ENCODE measurements at regions of chr2 and their contacts with region 1.

Region 1: GRCh38 chr2:20661067-20661980 is 5.6 kb upstream of the GDF7 start:
- DNase-seq: peak; percentile 77
- H3K4me3 Mint-ChIP-seq: no peak overlapping the region
- H3K27ac Mint-ChIP-seq: peak overlapping the region; percentile 24
- H3K4me1 Mint-ChIP-seq: peaks cover 8% of the 10 kb centered on the region
- H3K27me3 Mint-ChIP-seq: peaks cover 77% of the 10 kb centered on the region

Region 2: DNA sequence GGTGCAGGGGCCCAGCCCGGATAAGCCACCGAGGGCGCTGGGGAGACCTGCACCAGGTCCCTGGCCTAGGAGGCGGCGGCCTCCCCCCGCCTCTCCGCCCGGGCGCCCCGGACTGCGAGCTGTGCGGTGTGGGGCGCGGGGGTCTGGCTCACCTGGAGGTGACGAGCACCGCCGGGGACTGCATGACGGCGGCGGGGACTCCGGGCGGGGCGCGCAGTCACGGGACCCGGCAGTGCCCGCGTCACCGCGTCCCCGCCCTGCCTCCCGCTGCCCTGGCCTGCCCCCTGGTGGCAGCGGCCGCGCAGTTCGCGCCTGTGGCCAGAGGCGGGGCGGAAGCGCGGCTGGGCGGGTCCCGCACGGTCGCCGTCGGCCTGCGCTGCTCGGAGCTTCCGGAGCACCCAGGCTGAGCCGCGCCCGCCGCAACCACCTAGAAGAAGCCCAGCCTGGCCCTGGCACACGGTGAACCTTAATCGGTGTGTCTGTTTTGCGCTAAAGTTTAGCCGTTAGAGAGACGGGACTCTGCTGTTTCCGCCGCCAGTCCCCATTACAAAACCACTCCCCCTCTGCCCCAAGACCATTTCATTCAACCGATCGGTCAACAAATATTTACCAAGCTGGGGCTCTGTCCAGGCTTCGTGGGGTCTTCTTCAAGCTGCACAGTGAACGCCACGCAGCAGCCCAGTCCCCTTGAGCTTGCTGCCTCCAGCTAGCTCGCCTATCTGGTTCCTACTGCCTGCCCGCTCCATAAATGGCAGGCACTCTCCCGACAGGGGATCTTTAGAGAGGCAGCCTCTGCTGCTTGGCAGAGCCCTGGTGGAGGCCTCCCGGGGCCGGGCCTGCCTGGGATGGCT is 10.2 kb before region 1 on chr2 and contains the start of gene HS1BP3:
- CTCF ChIA-PET with region 1: interaction called, 39 read pairs
- DNase-seq: peak; percentile 87
- H3K4me3 Mint-ChIP-seq: peak within 1 kb of the TSS; percentile 87
- H3K27ac Mint-ChIP-seq: peak within 1 kb of the TSS; percentile 88
- H3K4me1 Mint-ChIP-seq: peaks cover 37% of the 10 kb centered on the region
- H3K27me3 Mint-ChIP-seq: peaks cover 18% of the 10 kb centered on the region

Region 3: DNA sequence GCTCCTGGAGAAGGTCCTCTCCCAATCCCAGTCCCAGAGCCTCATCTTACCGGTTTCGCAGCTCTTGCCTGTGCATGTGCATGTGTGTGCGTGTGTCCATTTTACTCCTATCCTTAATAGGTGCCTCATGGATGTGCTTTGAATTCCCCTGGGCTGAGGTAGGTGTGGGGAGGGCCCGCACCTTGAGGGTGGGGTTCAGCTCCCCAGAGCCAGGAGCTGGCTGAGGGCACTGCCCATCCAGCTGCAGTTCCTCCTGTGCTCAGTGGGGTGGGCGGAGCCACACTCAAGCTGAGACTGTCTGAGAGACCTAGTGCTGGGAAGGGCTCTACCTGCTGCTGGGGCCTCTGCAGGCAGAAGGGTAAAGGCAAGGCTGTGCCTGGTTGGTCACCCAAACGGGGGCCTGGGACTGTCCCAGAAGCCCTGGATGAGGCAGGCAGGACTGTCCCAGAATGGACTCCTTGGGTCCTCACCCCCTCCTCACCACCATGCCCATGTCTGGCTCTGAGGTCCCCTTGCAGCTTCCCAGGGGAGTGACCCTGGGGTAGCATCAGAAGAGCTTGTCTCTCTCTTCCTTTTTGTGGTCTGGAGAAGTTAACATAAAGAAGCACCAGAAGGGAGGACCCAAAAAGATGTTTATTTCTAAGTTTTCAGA is 14.5 kb after region 1 on chr2:
- CTCF ChIA-PET with region 1: interaction called, 33 read pairs
- DNase-seq: no peak
- H3K4me3 Mint-ChIP-seq: no peak overlapping the region
- H3K27ac Mint-ChIP-seq: peak overlapping the region; percentile 2
- H3K4me1 Mint-ChIP-seq: no peaks in the 10 kb centered on the region
- H3K27me3 Mint-ChIP-seq: peaks cover 36% of the 10 kb centered on the region

Region 4: DNA sequence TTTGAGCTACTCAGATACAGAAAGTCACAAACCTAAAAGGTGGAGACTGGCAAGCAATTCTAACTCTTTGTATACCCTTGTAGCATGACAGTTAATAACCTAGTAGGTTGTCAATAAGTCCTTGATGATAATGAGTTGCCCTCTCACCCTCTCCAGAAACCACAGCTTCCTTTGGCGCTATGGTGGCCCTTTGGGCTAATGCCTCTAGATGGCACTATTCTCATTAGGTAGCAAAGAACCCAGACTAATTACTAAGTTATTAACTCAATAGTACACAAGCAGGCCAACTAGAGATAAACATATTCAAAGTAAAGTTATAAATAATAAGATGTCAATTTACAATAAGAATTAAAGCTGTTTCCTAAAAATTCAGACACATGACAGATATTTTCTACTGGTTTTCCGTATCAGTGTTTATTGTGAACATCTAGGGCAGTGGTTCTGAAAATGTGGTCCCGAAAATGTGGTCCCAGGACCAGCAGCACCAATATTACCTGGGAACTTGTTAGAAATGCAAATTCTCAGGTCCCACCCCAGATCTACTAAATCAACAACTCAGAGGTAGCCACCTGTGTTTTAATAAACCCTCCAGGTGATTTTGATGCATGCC is 120.4 kb after region 1 on chr2:
- CTCF ChIA-PET with region 1: interaction called, 11 read pairs
- DNase-seq: peak; percentile 22
- H3K4me3 Mint-ChIP-seq: no peak overlapping the region
- H3K27ac Mint-ChIP-seq: no peak overlapping the region
- H3K4me1 Mint-ChIP-seq: no peaks in the 10 kb centered on the region
- H3K27me3 Mint-ChIP-seq: no peaks in the 10 kb centered on the region

Region 5: DNA sequence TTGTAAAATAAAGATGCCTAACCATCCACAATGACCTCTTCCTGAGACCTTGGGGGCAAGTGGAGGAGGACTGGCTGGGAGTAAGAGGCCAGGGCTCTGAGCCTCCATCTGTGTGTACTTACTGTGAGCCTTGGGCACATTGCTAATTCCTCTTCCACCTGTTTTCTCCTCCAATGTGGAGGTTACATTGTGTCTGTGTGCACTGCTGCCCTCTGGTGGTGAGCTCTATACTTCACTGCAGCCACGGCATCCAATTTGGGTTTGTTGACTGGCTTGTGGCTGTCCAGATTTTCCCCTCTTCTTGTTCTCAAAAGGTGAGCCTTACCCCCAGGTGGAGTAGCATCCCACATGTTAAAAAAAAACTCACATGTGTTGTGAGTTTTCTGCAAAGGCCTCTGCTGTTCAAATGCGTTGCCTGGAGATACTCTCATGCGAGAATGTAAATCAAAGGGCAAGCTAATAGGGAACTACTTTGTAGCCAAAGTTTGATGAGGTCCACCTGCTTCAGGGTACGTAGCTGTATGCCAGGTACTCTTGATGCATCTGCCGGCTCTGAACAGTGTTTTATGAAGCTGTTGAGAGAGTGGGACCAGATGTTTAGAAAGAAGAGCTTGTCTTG is 301.7 kb after region 1 on chr2:
- CTCF ChIA-PET with region 1: interaction called, 150 read pairs
- DNase-seq: peak; percentile 80
- H3K4me3 Mint-ChIP-seq: no peak overlapping the region
- H3K27ac Mint-ChIP-seq: no peak overlapping the region
- H3K4me1 Mint-ChIP-seq: no peaks in the 10 kb centered on the region
- H3K27me3 Mint-ChIP-seq: peaks cover 26% of the 10 kb centered on the region

Region 6: DNA sequence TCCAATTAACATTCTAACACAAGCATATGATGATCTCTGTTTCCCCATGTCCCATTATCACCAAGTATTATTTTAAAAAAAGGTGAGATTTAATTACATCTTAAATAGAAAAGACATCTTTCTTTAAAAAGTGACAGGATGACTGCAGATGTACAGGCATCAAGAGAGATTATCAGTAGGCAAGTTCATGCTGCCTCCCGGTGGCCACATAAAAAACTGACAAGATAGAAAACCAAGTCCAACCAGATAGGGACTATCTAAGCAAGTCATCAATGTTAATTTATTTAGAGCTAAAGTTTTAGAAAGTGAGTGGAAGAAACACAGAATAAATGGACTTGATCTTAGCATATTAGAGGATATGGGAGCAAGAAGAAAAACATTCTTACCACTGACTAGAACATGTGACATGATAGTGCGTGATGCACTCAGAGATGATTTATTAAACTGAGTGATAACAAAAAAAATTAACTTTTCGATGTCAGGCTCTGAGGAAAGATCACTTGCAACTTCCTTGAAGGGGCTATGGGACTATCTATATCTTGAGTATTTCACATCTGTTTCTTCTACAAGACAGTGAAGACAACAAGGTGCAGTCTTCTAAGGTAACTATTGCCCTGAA is 457.1 kb after region 1 on chr2:
- CTCF ChIA-PET with region 1: interaction called, 14 read pairs
- DNase-seq: peak; percentile 26
- H3K4me3 Mint-ChIP-seq: no peak overlapping the region
- H3K27ac Mint-ChIP-seq: no peak overlapping the region
- H3K4me1 Mint-ChIP-seq: no peaks in the 10 kb centered on the region
- H3K27me3 Mint-ChIP-seq: no peaks in the 10 kb centered on the region